CD8-positive, alpha-beta T cell (primary cell): ENCODE measurements at regions of chr12 and their contacts with region 1.

Region 1: GRCh38 chr12:6423267-6424007 is 21.3 kb upstream of the CD27 start:
- DNase-seq: peak; percentile 53 to 94 (median 74)
- ATAC-seq: peak; percentile 63
- H3K4me3 ChIP-seq: no peak overlapping the region
- H3K4me3 Mint-ChIP-seq: no peak overlapping the region
- H3K27ac ChIP-seq: peak overlapping the region in 1 of 2 experiments; percentile 37
- H3K27ac Mint-ChIP-seq: peak overlapping the region; percentile 65
- H3K4me1 ChIP-seq: peaks cover 40% of the 10 kb centered on the region
- H3K4me1 Mint-ChIP-seq: peaks cover 41% of the 10 kb centered on the region
- H3K27me3 ChIP-seq: no peaks in the 10 kb centered on the region
- H3K27me3 Mint-ChIP-seq: no peaks in the 10 kb centered on the region
- CTCF ChIP-seq: peak; percentile 74

Region 2: GRCh38 chr12:6335451-6336078 is 87.9 kb before region 1 on chr12:
- CTCF ChIA-PET with region 1: interaction called, 16 read pairs
- POLR2A ChIA-PET with region 1: interaction called, 3 read pairs
- intact Hi-C with region 1: loop called (anchors 1 kb)
- DNase-seq: peak; percentile 68 to 95 (median 89)
- ATAC-seq: peak; percentile 68
- H3K4me3 ChIP-seq: peak overlapping the region; percentile 77 to 99
- H3K4me3 Mint-ChIP-seq: no peak overlapping the region
- H3K27ac ChIP-seq: peak overlapping the region; percentile 61 to 87
- H3K27ac Mint-ChIP-seq: no peak overlapping the region
- H3K4me1 ChIP-seq: peaks cover 82% of the 10 kb centered on the region
- H3K4me1 Mint-ChIP-seq: peaks cover 53% of the 10 kb centered on the region
- H3K27me3 ChIP-seq: no peaks in the 10 kb centered on the region
- H3K27me3 Mint-ChIP-seq: no peaks in the 10 kb centered on the region
- CTCF ChIP-seq: peak; percentile 71

Region 3: DNA sequence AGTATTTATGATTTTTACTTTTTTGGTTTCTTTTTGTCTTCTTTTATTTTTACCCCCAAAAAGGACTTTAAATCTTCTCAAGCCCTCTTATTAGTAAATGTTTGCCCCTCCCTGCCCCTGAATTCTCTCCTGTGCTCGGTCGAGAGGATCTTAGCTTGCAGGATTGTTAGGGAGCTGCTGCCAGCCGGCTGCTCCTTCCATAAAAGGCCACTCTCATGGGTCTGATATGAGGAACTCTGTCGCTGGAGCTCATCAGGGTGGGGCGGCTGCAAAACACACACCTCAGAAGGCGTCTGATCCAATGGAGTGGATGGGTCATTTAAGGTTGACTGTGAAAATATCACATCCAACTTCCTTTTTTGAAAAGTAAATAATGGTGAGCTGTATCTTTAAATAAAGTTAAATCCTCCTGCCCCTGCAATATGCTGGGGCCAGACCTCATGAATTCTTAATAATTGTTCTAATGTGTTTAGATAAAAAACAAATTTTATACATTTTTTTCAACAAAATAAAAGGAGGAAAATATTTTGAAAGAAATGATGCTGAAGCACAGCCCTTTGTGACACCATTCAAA is 30.8 kb before region 1 on chr12:
- CTCF ChIA-PET with region 1: no interaction called
- POLR2A ChIA-PET with region 1: no interaction called
- intact Hi-C with region 1: no loop called
- DNase-seq: no peak
- ATAC-seq: no peak
- H3K4me3 ChIP-seq: no peak overlapping the region
- H3K4me3 Mint-ChIP-seq: no peak overlapping the region
- H3K27ac ChIP-seq: no peak overlapping the region
- H3K27ac Mint-ChIP-seq: no peak overlapping the region
- H3K4me1 ChIP-seq: no peaks in the 10 kb centered on the region
- H3K4me1 Mint-ChIP-seq: no peaks in the 10 kb centered on the region
- H3K27me3 ChIP-seq: no peaks in the 10 kb centered on the region
- H3K27me3 Mint-ChIP-seq: no peaks in the 10 kb centered on the region
- CTCF ChIP-seq: no peak

Region 4: GRCh38 chr12:6443361-6443983 is 20.0 kb after region 1 on chr12:
- CTCF ChIA-PET with region 1: interaction called, 68 read pairs
- POLR2A ChIA-PET with region 1: interaction called, 4 read pairs
- intact Hi-C with region 1: loop called (anchors 1 to 2 kb)
- DNase-seq: peak in 4 of 9 experiments; percentile 44 to 65 (median 48)
- ATAC-seq: peak; percentile 30
- H3K4me3 ChIP-seq: peak overlapping the region in 1 of 2 experiments; percentile 2
- H3K4me3 Mint-ChIP-seq: peak overlapping the region; percentile 99
- H3K27ac ChIP-seq: peak overlapping the region; percentile 19 to 58
- H3K27ac Mint-ChIP-seq: peak overlapping the region; percentile 93
- H3K4me1 ChIP-seq: peaks cover 38% of the 10 kb centered on the region
- H3K4me1 Mint-ChIP-seq: peaks cover 67% of the 10 kb centered on the region
- H3K27me3 ChIP-seq: no peaks in the 10 kb centered on the region
- H3K27me3 Mint-ChIP-seq: no peaks in the 10 kb centered on the region
- CTCF ChIP-seq: no peak

Region 5: GRCh38 chr12:6470375-6471163 is 47.1 kb after region 1 on chr12 and contains the start of gene VAMP1:
- CTCF ChIA-PET with region 1: interaction called, 284 read pairs
- POLR2A ChIA-PET with region 1: interaction called, 109 read pairs
- intact Hi-C with region 1: loop called (anchors 1 kb)
- DNase-seq: peak; percentile 94 to 98 (median 97)
- ATAC-seq: peak; percentile 88
- H3K4me3 ChIP-seq: peak within 1 kb of the TSS; percentile 88 to 89
- H3K4me3 Mint-ChIP-seq: peak within 1 kb of the TSS; percentile 92
- H3K27ac ChIP-seq: peak within 1 kb of the TSS; percentile 79 to 84
- H3K27ac Mint-ChIP-seq: peak within 1 kb of the TSS; percentile 90
- H3K4me1 ChIP-seq: peaks cover 42% of the 10 kb centered on the region
- H3K4me1 Mint-ChIP-seq: peaks cover 47% of the 10 kb centered on the region
- H3K27me3 ChIP-seq: no peaks in the 10 kb centered on the region
- H3K27me3 Mint-ChIP-seq: no peaks in the 10 kb centered on the region
- CTCF ChIP-seq: no peak
- total RNA-seq, gene VAMP1: 43.9 to 50.9 TPM

Region 6: DNA sequence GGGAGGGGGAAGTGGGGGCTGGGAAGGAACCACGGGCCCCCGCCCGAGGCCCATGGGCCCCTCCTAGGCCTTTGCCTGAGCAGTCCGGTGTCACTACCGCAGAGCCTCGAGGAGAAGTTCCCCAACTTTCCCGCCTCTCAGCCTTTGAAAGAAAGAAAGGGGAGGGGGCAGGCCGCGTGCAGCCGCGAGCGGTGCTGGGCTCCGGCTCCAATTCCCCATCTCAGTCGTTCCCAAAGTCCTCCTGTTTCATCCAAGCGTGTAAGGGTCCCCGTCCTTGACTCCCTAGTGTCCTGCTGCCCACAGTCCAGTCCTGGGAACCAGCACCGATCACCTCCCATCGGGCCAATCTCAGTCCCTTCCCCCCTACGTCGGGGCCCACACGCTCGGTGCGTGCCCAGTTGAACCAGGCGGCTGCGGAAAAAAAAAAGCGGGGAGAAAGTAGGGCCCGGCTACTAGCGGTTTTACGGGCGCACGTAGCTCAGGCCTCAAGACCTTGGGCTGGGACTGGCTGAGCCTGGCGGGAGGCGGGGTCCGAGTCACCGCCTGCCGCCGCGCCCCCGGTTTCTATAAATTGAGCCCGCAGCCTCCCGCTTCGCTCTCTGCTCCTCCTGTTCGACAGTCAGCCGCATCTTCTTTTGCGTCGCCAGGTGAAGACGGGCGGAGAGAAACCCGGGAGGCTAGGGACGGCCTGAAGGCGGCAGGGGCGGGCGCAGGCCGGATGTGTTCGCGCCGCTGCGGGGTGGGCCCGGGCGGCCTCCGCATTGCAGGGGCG is 110.7 kb after region 1 on chr12 and contains the start of gene GAPDH:
- CTCF ChIA-PET with region 1: interaction called, 170 read pairs
- POLR2A ChIA-PET with region 1: interaction called, 19 read pairs
- intact Hi-C with region 1: loop called (anchors 1 kb)
- DNase-seq: peak; percentile 66 to 92 (median 84)
- ATAC-seq: no peak
- H3K4me3 ChIP-seq: peak within 1 kb of the TSS; percentile 85 to 94
- H3K4me3 Mint-ChIP-seq: peak within 1 kb of the TSS; percentile 87
- H3K27ac ChIP-seq: peak within 1 kb of the TSS; percentile 85 to 88
- H3K27ac Mint-ChIP-seq: peak within 1 kb of the TSS; percentile 96
- H3K4me1 ChIP-seq: peaks cover 47% of the 10 kb centered on the region
- H3K4me1 Mint-ChIP-seq: peaks cover 49% of the 10 kb centered on the region
- H3K27me3 ChIP-seq: no peaks in the 10 kb centered on the region
- H3K27me3 Mint-ChIP-seq: no peaks in the 10 kb centered on the region
- CTCF ChIP-seq: no peak
- total RNA-seq, gene GAPDH: 503 to 513 TPM

Region 7: GRCh38 chr12:6778574-6779550 is 355.4 kb after region 1 on chr12:
- CTCF ChIA-PET with region 1: interaction called, 3 read pairs
- POLR2A ChIA-PET with region 1: no interaction called
- intact Hi-C with region 1: loop called in 1 of 2 experiments (anchors 10 kb)
- DNase-seq: peak; percentile 80 to 92 (median 88)
- ATAC-seq: peak; percentile 72
- H3K4me3 ChIP-seq: peak overlapping the region; percentile 40 to 64
- H3K4me3 Mint-ChIP-seq: peak overlapping the region; percentile 85
- H3K27ac ChIP-seq: peak overlapping the region in 1 of 2 experiments; percentile 8
- H3K27ac Mint-ChIP-seq: peak overlapping the region; percentile 71
- H3K4me1 ChIP-seq: peaks cover 20% of the 10 kb centered on the region
- H3K4me1 Mint-ChIP-seq: peaks cover 27% of the 10 kb centered on the region
- H3K27me3 ChIP-seq: no peaks in the 10 kb centered on the region
- H3K27me3 Mint-ChIP-seq: peaks cover 12% of the 10 kb centered on the region
- CTCF ChIP-seq: peak; percentile 94